Colonic mucosa (tissue), 4 donors: ENCODE measurements at regions of chr7 and their contacts with region 1.

Region 1: DNA sequence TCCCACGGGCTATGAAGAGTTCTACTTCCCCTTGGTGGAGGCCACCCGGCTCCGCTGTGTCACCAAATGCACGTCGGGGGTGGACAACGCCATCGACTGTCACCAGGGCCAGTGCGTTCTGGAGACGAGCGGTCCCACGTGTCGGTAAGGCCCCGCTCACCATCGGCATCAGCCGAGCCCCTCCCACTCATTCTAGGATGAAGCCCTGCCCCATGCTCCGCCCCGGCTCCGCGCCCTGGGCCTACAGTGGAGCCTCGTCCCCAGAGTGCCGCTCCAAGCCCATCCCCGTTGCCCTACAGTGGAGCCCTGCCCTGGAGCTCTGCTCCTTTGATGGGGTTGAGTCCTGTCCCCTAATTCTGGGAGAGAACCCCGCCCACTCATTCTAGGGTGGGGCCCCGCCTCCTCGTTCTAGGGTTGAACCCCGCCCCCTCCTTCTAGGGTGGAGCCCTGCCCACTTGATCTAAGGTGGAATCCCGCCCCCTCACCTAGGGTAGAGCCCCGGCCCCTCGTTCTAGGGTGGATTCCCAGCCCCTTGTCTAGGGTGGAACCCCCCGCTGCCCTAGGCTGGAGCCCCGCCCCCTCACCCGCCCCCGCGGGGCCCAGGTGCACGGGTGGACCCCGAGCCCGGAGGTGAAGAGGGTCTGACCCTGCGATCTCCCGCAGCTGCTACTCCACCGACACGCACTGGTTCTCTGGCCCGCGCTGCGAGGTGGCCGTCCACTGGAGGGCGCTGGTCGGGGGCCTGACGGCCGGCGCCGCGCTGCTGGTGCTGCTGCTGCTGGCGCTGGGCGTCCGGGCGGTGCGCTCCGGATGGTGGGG is 3.4 kb upstream of the MUC12 start:
- DNase-seq: peak; percentile 94
- H3K4me3 ChIP-seq: peak overlapping the region; percentile 58
- H3K27ac ChIP-seq: peak overlapping the region; percentile 89
- H3K4me1 ChIP-seq: no peaks in the 10 kb centered on the region
- H3K27me3 ChIP-seq: peaks cover 21% of the 10 kb centered on the region
- CTCF ChIP-seq: peak; percentile 72

Region 2: GRCh38 chr7:100896732-100897608 is 69.0 kb before region 1 on chr7:
- intact Hi-C with region 1: loop called (anchors 5 kb)
- DNase-seq: peak; percentile 81
- H3K4me3 ChIP-seq: peak overlapping the region; percentile 44
- H3K27ac ChIP-seq: peak overlapping the region; percentile 72
- H3K4me1 ChIP-seq: peaks cover 16% of the 10 kb centered on the region
- H3K27me3 ChIP-seq: peaks cover 21% of the 10 kb centered on the region
- CTCF ChIP-seq: peak; percentile 62